Right cardiac atrium (tissue), 5 donors: ENCODE measurements at regions of chr9 and their contacts with region 1.

Region 1: DNA sequence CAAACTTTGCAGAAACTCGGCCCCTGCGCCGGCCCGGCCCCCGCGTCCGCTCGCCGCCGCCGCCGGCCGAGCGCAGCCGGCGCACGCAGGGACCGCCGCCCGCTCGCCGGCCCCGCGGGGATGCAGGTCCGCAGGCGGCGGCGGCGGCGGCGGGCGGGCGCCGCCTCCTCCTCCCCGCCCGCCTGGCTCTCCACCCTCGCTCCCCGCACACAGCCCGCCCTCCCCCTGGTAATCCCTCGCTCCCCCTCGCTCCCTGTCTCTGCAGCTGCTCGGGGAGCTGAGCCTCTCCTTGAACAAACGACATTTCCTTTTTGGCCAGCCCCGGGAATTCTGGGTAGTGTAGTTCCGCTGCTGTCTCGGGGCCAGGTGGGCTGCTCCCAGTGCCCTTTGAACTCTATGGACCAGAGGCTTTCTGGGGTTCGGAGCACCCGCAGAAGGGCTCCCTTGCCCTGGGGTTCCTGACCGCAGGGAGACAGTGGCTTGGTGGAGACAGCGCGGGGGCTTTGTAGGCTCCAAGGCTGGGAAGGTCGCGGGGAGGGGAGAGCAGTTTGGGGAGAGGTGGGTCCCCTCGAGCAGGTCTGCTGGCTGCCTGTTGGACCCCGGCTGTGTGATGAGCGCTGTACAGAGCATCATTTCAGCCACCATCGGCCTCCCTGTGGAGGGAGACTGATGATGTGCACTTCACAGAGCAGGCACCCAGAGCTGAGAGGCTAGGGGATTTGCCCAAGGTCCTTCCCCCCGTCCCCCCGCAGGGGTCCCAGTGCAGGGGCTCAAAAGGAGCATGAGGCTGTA is 1.8 kb upstream of the FAM78A start:
- DNase-seq: peak; percentile 87 to 93 (median 93)
- ATAC-seq: peak; percentile 64 to 69
- H3K4me3 ChIP-seq: peak overlapping the region; percentile 86
- H3K27ac ChIP-seq: peak overlapping the region; percentile 83
- H3K4me1 ChIP-seq: no peaks in the 10 kb centered on the region
- H3K27me3 ChIP-seq: no peaks in the 10 kb centered on the region

Region 2: GRCh38 chr9:131237931-131238401 is 40.1 kb before region 1 on chr9:
- intact Hi-C with region 1: loop called in 1 of 4 experiments (anchors 5 kb)
- DNase-seq: peak; percentile 74 to 89 (median 88)
- ATAC-seq: peak; percentile 47 to 59
- H3K4me3 ChIP-seq: no peak overlapping the region
- H3K27ac ChIP-seq: peak overlapping the region; percentile 81
- H3K4me1 ChIP-seq: peaks cover 13% of the 10 kb centered on the region
- H3K27me3 ChIP-seq: no peaks in the 10 kb centered on the region